Heart right ventricle (tissue), 16 donors: ENCODE measurements at regions of chr1 and their contacts with region 1.

Region 1: DNA sequence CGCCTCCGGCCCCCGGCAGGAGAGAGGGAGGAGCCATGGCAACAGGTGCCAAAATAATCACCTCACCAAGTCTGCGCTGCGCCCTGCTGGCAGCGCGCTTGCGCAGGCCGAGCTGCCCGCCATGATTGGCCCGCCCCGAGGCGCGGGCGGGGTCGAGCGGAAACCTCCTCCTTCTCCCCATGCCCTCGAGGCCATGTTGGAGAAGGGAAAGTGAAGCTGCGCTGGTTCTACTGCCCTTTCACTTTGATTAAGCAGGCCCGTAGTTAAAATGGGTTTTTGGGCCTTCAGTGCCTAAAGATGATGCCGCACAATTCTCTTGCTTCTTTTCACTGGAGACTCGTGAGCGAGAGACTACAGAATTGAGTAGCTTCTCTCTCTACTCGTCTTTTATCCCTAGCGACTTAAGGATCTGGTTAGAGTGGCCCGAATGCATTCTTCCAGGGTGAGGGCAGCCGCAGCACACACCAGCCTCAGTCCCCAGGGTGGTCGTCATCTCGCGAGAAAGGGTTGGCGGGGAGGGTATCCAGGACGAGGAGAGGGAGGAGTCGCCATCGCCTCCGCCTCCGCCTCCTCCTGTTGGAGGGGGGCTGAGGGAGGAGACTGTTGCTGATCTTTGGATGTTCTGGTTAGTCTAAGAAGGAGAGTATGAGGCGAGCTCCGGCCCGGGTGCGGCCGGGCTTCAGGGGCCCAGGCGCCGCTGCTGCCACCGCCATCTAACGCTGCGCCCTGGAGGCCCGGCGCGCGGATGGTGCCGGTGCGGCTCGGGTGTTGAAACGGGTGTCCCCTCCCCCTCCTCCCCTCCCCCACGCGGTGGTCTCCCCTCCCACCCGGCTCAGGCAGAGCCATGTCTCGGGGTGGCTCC is at the start of gene DCAF6:
- DNase-seq: peak; percentile 96 to 98
- ATAC-seq: peak; percentile 91 to 96 (median 94)
- H3K4me3 ChIP-seq: peak within 1 kb of the TSS; percentile 57 to 99 (median 88)
- H3K27ac ChIP-seq: peak within 1 kb of the TSS; percentile 91 to 99 (median 97)
- H3K4me1 ChIP-seq: peaks cover 0 to 54% (median 47%) of the 10 kb centered on the region in 9 donors
- H3K27me3 ChIP-seq: no peaks in the 10 kb centered on the region
- CTCF ChIP-seq: no peak
- total RNA-seq, gene DCAF6: 155 to 226 (median 205) TPM

Region 2: DNA sequence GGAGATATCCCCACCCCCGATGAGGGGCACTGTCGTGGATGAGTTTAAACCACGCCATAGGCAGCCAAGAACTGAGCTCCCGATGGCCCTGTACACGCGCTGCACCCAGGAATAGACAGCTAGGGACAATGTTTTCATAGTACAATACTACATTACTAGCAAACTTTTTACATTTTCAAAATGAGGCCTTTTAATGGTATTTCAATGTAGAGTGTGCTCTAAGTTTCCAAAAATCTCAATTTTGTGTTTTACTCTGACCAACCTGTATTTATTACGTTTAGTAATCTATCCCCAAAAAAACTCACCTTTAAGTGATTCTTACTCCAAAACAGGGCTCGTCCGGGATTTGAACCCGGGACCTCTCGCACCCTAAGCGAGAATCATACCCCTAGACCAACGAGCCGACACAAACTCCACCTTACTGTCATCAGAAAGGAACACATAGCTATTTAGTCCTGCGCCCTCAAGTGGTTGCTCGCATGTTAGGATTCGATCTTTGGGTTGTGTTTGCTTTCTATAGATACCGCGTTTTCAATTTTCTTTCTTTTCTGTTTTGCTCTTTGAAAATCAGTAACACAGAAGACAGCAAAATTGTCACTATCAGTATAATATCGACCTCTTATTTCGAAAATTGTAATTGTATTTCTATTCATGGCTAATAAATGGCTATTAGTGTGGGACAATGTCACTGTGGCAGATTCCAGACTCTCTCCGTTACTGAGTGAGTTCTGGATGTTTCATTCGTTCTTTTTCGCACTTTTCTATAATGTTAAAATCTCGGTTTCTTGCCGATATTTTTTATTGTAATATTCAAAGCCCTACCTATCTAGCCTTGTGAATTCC is 220.9 kb before region 1 on chr1:
- intact Hi-C with region 1: loop called in 8 of 10 experiments (anchors 2 to 10 kb)
- DNase-seq: peak; percentile 77 to 90
- ATAC-seq: peak; percentile 36 to 80 (median 65)
- H3K4me3 ChIP-seq: peak overlapping the region; percentile 54 to 84 (median 72)
- H3K27ac ChIP-seq: peak overlapping the region; percentile 80 to 94 (median 88)
- H3K4me1 ChIP-seq: peaks cover 0 to 31% (median 6%) of the 10 kb centered on the region in 9 donors
- H3K27me3 ChIP-seq: no peaks in the 10 kb centered on the region
- CTCF ChIP-seq: peak; percentile 58 to 94 (median 78)

Region 3: GRCh38 chr1:167721617-167722151 is 214.6 kb before region 1 on chr1 and contains the start of gene MPZL1:
- intact Hi-C with region 1: loop called in 8 of 10 experiments (anchors 2 to 10 kb)
- DNase-seq: peak; percentile 96 to 98
- ATAC-seq: peak; percentile 99
- H3K4me3 ChIP-seq: peak within 1 kb of the TSS; percentile 65 to 99 (median 94)
- H3K27ac ChIP-seq: peak within 1 kb of the TSS; percentile 51 to 94 (median 88)
- H3K4me1 ChIP-seq: peaks cover 4 to 49% (median 37%) of the 10 kb centered on the region in 9 donors
- H3K27me3 ChIP-seq: no peaks in the 10 kb centered on the region
- CTCF ChIP-seq: no peak
- total RNA-seq, gene MPZL1: 15.6 to 52.5 (median 25.2) TPM

Region 4: DNA sequence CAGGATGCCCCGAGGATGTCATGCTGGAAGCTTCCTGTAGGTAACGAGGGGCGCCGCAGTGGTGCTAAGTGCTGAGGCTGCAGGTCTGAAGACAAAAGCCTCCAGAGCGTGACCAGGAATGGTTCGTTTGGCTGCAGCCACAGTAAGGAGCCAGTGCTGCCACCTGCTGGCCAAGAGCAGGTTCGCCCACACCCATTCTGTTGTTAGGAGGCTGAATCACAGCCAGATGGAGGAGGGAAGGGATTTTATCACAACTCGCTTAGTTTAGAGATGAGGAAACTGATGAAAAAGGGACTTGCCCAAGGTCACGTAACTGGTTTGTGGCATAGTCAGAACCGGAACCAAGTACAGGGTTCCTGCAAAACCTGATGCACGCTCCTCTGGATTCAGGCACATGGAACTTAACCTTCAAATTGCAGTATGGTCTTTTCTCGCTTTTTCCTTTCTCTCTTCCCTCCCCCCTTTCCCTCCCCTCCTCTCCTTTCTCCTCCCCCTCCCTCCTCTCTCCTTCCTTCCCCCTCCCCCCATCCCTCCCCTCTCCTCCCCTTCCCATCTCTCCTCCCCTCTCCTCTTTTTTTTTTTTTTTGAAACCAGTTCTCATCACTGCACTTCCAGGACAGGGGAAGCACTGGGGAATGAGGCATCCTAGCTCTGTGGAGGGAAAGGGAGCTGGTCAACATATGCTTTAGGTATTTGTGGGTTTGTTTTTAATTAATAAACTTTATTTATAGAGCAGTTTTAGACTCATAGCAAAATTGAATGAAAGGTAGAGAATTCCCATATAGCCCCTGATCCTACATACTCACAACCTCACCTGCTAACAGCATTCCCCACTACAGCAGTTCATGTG is 132.7 kb before region 1 on chr1:
- intact Hi-C with region 1: loop called in 1 of 10 experiments (anchors 10 kb)
- DNase-seq: peak; percentile 92
- ATAC-seq: peak; percentile 94 to 98 (median 96)
- H3K4me3 ChIP-seq: peak overlapping the region in 1 of 10 donors; percentile 28
- H3K27ac ChIP-seq: peak overlapping the region in 2 of 10 donors; percentile 3 to 45
- H3K4me1 ChIP-seq: peaks cover 0 to 22% (median 6%) of the 10 kb centered on the region in 9 donors
- H3K27me3 ChIP-seq: no peaks in the 10 kb centered on the region
- CTCF ChIP-seq: peak; percentile 88 to 99 (median 97)

Region 5: GRCh38 chr1:167973832-167974231 is 37.5 kb after region 1 on chr1:
- intact Hi-C with region 1: loop called in 1 of 10 experiments (anchors 5 kb)
- DNase-seq: no peak
- ATAC-seq: no peak
- H3K4me3 ChIP-seq: no peak overlapping the region
- H3K27ac ChIP-seq: no peak overlapping the region
- H3K4me1 ChIP-seq: peaks cover 0 to 25% (median 5%) of the 10 kb centered on the region in 9 donors
- H3K27me3 ChIP-seq: no peaks in the 10 kb centered on the region
- CTCF ChIP-seq: no peak

Region 6: DNA sequence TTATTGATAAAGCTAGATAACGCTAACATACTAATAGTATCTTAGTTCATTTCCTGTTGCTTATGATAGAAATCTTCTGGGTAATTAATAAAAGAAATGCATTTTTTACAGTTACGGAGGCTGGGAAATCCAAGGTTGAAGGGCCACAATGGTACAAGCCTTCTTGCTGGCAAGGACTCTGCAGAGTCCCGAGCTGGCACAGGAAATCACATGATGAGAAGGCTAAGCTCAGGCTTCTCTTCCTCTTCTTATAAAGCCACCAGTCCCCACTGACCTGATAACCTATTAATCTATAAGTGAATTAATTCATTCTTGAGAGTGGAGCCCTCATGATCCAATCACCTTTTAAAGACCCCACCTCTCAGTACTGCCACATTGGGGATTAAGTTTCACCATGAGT is 117.8 kb after region 1 on chr1:
- intact Hi-C with region 1: loop called in 1 of 10 experiments (anchors 5 kb)
- DNase-seq: no peak
- ATAC-seq: peak in 6 of 8 donors; percentile 57 to 81 (median 69)
- H3K4me3 ChIP-seq: no peak overlapping the region
- H3K27ac ChIP-seq: peak overlapping the region in 7 of 10 donors; percentile 1 to 62 (median 48)
- H3K4me1 ChIP-seq: peaks cover 0 to 47% (median 16%) of the 10 kb centered on the region in 9 donors
- H3K27me3 ChIP-seq: no peaks in the 10 kb centered on the region
- CTCF ChIP-seq: no peak

Region 7: DNA sequence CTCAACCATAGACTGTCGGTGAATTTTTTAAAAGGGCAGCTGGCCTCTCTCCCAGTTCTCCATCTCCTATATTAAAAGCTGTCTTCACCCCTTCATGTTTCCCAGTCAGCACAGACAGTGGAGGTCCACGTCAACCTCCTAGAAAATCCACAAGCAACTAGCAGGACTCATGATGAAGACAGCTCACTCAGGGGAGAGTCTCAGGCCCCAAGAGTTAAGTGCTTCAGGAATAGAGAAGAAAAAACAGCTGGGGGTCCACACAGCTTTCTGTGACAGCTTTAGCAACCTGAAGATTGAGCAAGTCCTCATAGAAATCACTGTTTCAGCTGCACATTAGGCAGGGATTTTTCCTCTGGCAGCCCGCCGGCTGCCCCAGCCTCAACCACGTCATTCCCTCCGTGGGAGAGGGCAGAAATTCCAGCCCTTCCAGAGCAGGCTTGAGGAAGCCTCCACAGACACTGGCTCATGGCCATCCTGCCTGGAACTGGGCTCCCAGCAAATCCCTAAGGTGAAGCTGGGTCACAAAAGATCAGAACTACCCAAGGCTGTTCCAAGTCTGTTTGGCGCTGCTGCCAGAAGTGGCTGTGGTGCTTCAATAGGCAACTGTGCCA is 185.2 kb after region 1 on chr1:
- intact Hi-C with region 1: no loop called
- DNase-seq: peak; percentile 80 to 86
- ATAC-seq: peak; percentile 84 to 96 (median 94)
- H3K4me3 ChIP-seq: peak overlapping the region in 1 of 10 donors; percentile 12
- H3K27ac ChIP-seq: peak overlapping the region in 8 of 10 donors; percentile 27 to 71 (median 42)
- H3K4me1 ChIP-seq: peaks cover 0 to 23% (median 16%) of the 10 kb centered on the region in 9 donors
- H3K27me3 ChIP-seq: no peaks in the 10 kb centered on the region
- CTCF ChIP-seq: no peak

Region 8: DNA sequence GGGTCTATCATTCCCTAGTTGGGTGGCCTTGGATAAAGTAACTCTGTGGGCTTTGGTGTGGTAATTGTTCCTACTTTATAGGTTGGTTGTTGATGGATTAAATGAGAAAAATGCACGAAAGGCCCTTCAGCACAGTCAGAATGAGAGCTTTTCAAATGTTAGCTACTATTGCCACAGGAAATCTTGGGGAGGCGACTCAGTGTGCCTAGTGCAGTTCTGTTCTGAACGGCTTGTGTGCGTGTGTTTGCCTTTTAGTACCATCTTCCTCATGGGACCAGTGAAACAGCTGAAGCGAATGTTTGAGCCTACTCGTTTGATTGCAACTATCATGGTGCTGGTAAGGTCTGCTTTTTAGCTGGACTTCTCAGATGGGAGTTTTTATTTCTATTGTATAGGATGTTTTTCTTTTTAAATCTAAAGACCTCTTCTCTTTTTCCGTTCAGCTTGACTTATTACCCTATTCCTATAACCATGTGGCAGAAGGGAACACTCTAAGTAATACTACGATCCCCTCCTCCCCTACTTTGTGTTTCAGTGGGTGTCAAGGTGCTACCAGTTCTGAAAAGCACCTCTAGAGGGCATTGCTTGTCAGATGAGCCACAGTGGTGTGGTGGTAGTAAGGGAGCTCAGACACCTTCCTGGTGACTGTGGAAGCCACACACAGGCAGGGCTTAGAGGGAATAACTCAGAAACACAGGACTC is 298.7 kb after region 1 on chr1:
- intact Hi-C with region 1: no loop called
- DNase-seq: no peak
- ATAC-seq: peak in 5 of 8 donors; percentile 38 to 71 (median 57)
- H3K4me3 ChIP-seq: no peak overlapping the region
- H3K27ac ChIP-seq: no peak overlapping the region
- H3K4me1 ChIP-seq: peaks cover 0 to 35% (median 15%) of the 10 kb centered on the region in 9 donors
- H3K27me3 ChIP-seq: no peaks in the 10 kb centered on the region
- CTCF ChIP-seq: peak in 8 of 9 donors; percentile 9 to 65 (median 50)